Transverse colon (tissue), 4 donors: ENCODE measurements at regions of chr10 and their contacts with region 1.

Region 1: DNA sequence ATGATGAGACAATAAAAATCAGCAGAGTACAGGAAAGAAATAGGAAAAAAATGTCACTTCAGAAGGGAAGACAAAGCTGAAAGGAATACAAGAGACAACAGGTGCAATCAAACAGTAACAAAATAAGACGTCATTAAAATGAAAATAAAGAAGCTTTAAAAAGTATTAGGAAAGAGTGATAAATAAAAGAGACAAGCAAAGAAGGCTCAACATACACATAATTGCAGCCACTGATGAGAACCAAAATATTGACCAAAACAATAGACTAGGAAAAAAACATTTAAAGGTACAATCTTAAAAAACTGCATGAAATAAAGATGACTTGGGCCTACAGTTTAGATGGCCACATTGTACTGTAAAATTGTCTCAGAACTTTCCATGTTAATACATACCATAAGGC is 160.5 kb upstream of the MINDY3 start:
- DNase-seq: no peak
- H3K4me3 ChIP-seq: no peak overlapping the region
- H3K27ac ChIP-seq: no peak overlapping the region
- H3K4me1 ChIP-seq: no peaks in the 10 kb centered on the region
- H3K27me3 ChIP-seq: no peaks in the 10 kb centered on the region
- CTCF ChIP-seq: no peak
- EP300 ChIP-seq: no peak
- POLR2A ChIP-seq: no peak

Region 2: DNA sequence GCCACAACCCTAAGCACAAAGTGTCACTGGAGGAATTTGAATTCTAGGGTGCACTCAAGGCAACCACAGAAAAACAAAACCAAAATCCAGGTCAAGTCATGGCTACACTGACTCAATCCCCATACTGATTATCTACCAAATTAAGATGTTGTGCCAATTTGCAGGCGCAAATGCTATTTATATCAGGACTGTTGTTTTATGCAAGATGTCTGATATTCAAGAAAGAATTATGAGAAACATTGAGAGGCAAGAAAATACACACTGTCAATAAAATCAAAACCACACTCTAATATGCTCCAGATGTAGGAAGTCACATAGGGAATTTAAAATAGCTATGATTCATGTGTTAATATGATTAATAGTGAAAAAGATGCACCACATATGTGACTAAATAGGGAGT is 19.3 kb before region 1 on chr10:
- in situ Hi-C with region 1: no loop called
- intact Hi-C with region 1: no loop called
- DNase-seq: no peak
- H3K4me3 ChIP-seq: no peak overlapping the region
- H3K27ac ChIP-seq: no peak overlapping the region
- H3K4me1 ChIP-seq: no peaks in the 10 kb centered on the region
- H3K27me3 ChIP-seq: no peaks in the 10 kb centered on the region
- CTCF ChIP-seq: no peak
- EP300 ChIP-seq: no peak
- POLR2A ChIP-seq: no peak

Region 3: DNA sequence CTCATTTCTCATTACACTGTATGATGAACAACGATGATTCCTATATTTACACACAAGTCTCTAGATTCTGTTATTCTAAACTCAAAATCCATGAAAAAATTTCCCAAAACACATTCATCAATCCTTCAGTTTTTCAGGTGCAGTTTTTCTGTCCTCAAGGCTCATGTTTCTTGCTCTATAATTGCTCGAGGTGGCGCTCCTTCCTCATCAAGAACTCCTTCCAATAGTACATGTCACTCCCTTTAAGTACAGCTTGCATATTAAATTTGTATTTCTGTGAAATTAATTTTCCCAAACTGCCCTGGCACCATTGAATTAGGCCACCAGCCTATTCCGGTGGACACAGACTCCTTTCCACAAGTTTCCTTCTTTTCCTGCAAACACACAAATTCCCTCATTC is 28.2 kb after region 1 on chr10:
- in situ Hi-C with region 1: no loop called
- intact Hi-C with region 1: loop called (anchors 1 kb)
- DNase-seq: no peak
- H3K4me3 ChIP-seq: no peak overlapping the region
- H3K27ac ChIP-seq: no peak overlapping the region
- H3K4me1 ChIP-seq: no peaks in the 10 kb centered on the region
- H3K27me3 ChIP-seq: no peaks in the 10 kb centered on the region
- CTCF ChIP-seq: no peak
- EP300 ChIP-seq: no peak
- POLR2A ChIP-seq: no peak